Activated CD4-positive, alpha-beta memory T cell treated with anti-CD3 and anti-CD28 coated beads for 36 hours (primary cell): ENCODE measurements at regions of chr2 and their contacts with region 1.

Region 1: GRCh38 chr2:161077367-161078210 is 82.6 kb upstream of the TANK start:
- DNase-seq: peak; percentile 84
- H3K4me3 Mint-ChIP-seq: peak overlapping the region; percentile 6
- H3K27ac Mint-ChIP-seq: peak overlapping the region; percentile 85
- H3K4me1 Mint-ChIP-seq: peaks cover 42% of the 10 kb centered on the region
- H3K27me3 Mint-ChIP-seq: no peaks in the 10 kb centered on the region

Region 2: DNA sequence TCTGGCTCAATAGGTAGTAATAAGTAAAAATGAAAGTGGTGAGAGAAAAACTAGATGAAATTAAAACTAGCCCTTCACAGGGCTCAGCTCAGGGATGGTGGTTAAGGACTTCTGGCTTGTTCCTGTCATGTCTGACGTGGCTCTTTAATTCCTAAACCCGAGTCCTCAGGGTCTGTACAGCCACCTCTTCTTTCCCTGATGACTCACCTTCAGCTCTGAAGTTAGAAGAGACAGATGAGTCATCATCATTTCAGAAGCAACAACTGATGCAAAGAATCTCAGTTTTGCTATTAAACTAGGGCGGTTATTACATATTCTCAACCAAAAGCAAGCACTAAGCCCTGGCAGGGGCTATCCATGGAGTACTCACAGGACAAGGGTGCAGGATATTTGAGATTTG is 853.5 kb before region 1 on chr2:
- CTCF ChIA-PET with region 1: no interaction called
- POLR2A ChIA-PET with region 1: no interaction called
- intact Hi-C with region 1: loop called (anchors 1 kb)
- DNase-seq: peak; percentile 54
- H3K4me3 Mint-ChIP-seq: peak overlapping the region; percentile 45
- H3K27ac Mint-ChIP-seq: peak overlapping the region; percentile 73
- H3K4me1 Mint-ChIP-seq: peaks cover 64% of the 10 kb centered on the region
- H3K27me3 Mint-ChIP-seq: peaks cover 16% of the 10 kb centered on the region

Region 3: DNA sequence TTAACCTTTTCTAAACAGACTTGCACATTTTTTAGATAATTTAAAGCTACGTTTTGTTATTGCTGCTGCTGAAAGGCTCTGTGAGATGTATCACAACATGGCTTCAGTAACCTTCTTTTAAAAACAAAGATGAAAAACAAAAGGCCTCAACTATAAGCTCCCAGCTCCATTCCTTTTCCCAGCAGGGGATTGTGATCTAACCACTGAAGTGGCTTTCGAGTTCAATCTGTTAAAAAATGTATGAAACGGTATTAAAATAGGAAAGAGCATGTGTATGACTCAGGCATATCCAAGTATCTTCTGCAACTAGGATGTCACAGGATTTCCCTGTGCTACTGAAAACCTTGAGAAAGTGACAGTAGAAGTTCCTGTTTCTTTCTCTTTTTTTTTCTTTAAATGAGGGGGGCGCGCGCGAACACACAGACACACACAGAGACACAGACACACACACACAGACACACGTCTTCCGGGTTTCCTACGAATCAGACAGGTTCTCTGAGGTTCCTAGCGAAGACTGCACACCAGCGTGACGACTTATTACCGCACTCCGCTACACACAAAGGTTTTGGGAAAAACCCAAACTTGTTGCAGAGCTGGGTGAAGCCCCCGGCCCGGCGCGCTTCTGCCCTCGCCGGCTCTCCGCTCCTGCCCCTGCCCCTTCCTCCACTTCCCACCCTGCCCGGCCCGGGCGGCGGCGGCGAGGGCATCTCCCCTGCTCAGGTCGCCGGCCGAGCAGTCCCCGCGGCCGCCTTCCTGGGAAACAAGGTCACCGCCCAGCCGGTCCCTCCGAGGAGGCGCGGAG is 670.8 kb before region 1 on chr2:
- CTCF ChIA-PET with region 1: no interaction called
- POLR2A ChIA-PET with region 1: no interaction called
- intact Hi-C with region 1: loop called (anchors 5 kb)
- DNase-seq: peak; percentile 78
- H3K4me3 Mint-ChIP-seq: peak overlapping the region; percentile 82
- H3K27ac Mint-ChIP-seq: peak overlapping the region; percentile 94
- H3K4me1 Mint-ChIP-seq: peaks cover 80% of the 10 kb centered on the region
- H3K27me3 Mint-ChIP-seq: no peaks in the 10 kb centered on the region

Region 4: GRCh38 chr2:161104054-161104553 is 26.5 kb after region 1 on chr2:
- CTCF ChIA-PET with region 1: interaction called, 4 read pairs
- POLR2A ChIA-PET with region 1: interaction called, 3 read pairs
- intact Hi-C with region 1: loop called (anchors 1 kb)
- DNase-seq: peak; percentile 22
- H3K4me3 Mint-ChIP-seq: no peak overlapping the region
- H3K27ac Mint-ChIP-seq: no peak overlapping the region
- H3K4me1 Mint-ChIP-seq: peaks cover 19% of the 10 kb centered on the region
- H3K27me3 Mint-ChIP-seq: no peaks in the 10 kb centered on the region

Region 5: GRCh38 chr2:161166538-161167409 is 89.2 kb after region 1 on chr2:
- CTCF ChIA-PET with region 1: no interaction called
- POLR2A ChIA-PET with region 1: no interaction called
- intact Hi-C with region 1: loop called (anchors 1 kb)
- DNase-seq: peak; percentile 87
- H3K4me3 Mint-ChIP-seq: peak overlapping the region; percentile 34
- H3K27ac Mint-ChIP-seq: peak overlapping the region; percentile 91
- H3K4me1 Mint-ChIP-seq: peaks cover 84% of the 10 kb centered on the region
- H3K27me3 Mint-ChIP-seq: no peaks in the 10 kb centered on the region

Region 6: DNA sequence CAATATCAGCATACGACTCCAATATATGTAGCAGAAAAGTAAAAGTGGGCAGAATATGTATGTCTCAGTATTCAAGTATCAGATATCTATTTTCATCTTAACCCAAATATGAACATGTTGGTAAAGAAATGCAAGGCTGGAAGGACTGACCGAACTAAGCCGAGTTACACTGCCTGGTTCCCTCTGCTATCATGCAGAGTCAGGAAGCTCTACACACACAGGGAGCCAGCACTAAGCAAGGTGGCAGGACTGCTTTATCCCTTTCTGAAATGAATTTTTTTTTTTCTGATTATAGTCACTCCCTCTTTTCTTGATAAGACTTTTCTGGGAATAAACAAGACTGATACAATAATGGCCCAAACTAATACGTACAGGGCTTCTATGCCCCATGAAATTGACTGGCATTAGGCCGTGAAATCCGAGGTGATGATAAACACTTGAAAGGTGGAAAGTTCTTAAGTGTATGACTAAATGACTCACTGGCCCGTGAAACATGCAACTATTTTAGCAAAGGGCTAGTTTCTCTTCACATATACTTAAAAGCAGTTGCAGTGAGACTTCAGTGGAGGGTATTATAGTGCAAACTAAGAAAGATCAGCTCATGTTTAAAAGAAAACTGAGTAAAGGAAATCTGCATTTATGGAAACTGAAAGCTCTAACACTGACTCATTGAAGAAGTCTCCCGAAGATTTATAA is 981.5 kb after region 1 on chr2:
- CTCF ChIA-PET with region 1: no interaction called
- POLR2A ChIA-PET with region 1: no interaction called
- intact Hi-C with region 1: loop called (anchors 5 kb)
- DNase-seq: peak; percentile 33
- H3K4me3 Mint-ChIP-seq: peak overlapping the region; percentile 54
- H3K27ac Mint-ChIP-seq: peak overlapping the region; percentile 93
- H3K4me1 Mint-ChIP-seq: peaks cover 82% of the 10 kb centered on the region
- H3K27me3 Mint-ChIP-seq: no peaks in the 10 kb centered on the region